Activated T-helper 1 cell treated with anti-CD3 and anti-CD28 coated beads, Interleukin-12 subunit alpha, Interleukin-12 subunit beta, Interleukin-2, Interleukin-4 antibody, amounts not matched to agents 30 ng/mL and 10 ng/mL and 1 ng/mL, durations not matched to agents 14 hours and 24 hours and 36 hours (primary cell): ENCODE measurements at regions of chrX and their contacts with region 1.

Region 1: GRCh38 chrX:73214426-73215094 is at the start of gene NAP1L2:
- DNase-seq: peak; percentile 14
- H3K4me3 Mint-ChIP-seq: peak within 1 kb of the TSS; percentile 89
- H3K27ac Mint-ChIP-seq: peak within 1 kb of the TSS; percentile 59
- H3K4me1 Mint-ChIP-seq: peaks cover 10% of the 10 kb centered on the region
- H3K27me3 Mint-ChIP-seq: peaks cover 7% of the 10 kb centered on the region
- total RNA-seq, gene NAP1L2: 1.7 and 1.8 TPM in 2 replicates

Region 2: GRCh38 chrX:72705814-72706213 is 508.7 kb before region 1 on chrX:
- intact Hi-C with region 1: loop called (anchors 10 kb)
- DNase-seq: no peak
- H3K4me3 Mint-ChIP-seq: no peak overlapping the region
- H3K27ac Mint-ChIP-seq: no peak overlapping the region
- H3K4me1 Mint-ChIP-seq: no peaks in the 10 kb centered on the region
- H3K27me3 Mint-ChIP-seq: no peaks in the 10 kb centered on the region

Region 3: DNA sequence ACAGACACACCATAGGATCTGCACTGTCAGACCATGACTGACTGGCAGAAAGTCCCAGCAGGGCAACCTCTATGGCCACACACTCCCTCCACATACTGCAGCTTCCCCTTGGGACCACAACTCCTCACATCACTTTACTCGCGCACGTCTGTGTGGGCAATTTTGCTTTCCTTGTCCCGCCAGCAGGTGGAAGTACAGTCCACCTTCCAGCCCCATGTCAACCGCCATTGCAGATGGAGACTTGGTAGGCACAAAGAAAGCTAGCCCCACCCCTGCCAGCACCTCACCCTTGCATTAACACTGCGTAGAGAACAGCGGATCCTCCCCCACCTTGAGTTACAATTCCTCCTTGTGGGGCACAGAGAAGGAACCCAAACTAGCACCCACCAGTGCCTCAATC is 74.5 kb after region 1 on chrX:
- intact Hi-C with region 1: no loop called
- DNase-seq: no peak
- H3K4me3 Mint-ChIP-seq: no peak overlapping the region
- H3K27ac Mint-ChIP-seq: no peak overlapping the region
- H3K4me1 Mint-ChIP-seq: no peaks in the 10 kb centered on the region
- H3K27me3 Mint-ChIP-seq: no peaks in the 10 kb centered on the region

Region 4: DNA sequence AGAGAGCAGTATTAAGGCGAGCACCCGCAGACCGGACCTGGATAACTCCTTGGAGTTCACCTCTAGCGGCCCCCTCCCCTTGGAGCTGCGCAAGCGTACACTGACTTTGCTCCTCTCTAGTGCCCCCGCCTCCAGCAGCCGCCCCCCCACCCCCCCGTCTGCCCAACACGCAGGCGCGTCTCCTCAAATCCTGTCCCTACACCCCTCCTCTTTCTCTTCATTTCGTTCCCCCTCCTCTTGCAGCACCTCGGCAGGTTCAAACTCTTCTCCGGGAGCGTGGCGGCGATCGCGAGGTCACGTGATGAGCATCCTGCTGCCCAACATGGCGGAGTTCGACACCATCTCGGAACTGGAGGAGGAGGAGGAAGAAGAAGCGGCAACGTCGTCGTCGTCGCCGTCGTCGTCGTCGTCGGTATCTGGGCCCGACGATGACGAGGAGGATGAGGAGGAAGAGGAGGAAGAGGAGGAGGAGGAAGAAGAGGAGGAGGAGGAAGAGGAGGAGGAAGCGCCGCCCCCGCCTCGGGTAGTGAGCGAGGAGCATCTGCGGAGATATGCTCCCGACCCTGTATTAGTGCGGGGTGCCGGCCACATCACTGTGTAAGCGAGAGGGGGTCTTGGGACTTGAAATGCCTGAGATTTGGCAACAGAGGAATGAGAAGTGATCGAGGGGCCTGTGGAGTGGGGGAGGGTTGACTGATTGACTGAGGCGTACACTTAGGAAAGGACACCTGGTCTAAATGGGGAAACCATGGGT is 348.6 kb after region 1 on chrX and contains the start of gene CHIC1:
- intact Hi-C with region 1: loop called (anchors 2 kb)
- DNase-seq: peak; percentile 63
- H3K4me3 Mint-ChIP-seq: peak within 1 kb of the TSS; percentile 98
- H3K27ac Mint-ChIP-seq: peak within 1 kb of the TSS; percentile 99
- H3K4me1 Mint-ChIP-seq: peaks cover 24% of the 10 kb centered on the region
- H3K27me3 Mint-ChIP-seq: no peaks in the 10 kb centered on the region
- total RNA-seq, gene CHIC1: 5.2 and 6.9 TPM in 2 replicates